Activated T-helper 1 cell treated with anti-CD3 and anti-CD28 coated beads, Interleukin-12 subunit alpha, Interleukin-12 subunit beta, Interleukin-2, Interleukin-4 antibody, amounts not matched to agents 30 ng/mL and 10 ng/mL and 1 ng/mL, durations not matched to agents 14 hours and 24 hours and 36 hours (primary cell): ENCODE measurements at regions of chr13 and their contacts with region 1.

Region 1: DNA sequence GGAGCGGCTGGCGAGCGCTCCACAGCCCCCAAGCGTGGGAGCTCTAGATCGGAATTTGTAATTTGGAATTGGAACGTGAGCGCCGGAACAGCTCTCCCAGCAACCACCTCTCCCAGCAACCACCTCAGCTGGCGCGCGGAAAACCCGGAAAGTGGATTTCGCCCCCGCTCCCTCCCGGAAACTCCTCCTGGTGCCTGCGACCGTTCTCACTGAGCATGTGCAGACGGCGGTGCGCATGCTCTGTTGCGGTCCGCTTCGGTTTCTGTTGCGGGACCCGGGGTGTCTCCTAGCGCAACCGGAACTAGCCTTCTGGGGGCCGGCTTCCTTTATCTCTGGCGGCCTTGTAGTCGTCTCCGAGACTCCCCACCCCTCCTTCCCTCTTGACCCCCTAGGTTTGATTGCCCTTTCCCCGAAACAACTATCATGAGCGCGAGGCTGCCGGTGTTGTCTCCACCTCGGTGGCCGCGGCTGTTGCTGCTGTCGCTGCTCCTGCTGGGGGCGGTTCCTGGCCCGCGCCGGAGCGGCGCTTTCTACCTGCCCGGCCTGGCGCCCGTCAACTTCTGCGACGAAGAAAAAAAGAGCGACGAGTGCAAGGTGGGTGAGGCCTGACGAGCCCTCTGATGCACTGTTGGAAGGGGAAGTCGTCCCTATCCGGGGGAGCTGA is at the start of gene TM9SF2:
- DNase-seq: peak; percentile 95
- H3K4me3 Mint-ChIP-seq: peak within 1 kb of the TSS; percentile 96
- H3K27ac Mint-ChIP-seq: peak within 1 kb of the TSS; percentile 95
- H3K4me1 Mint-ChIP-seq: peaks cover 70% of the 10 kb centered on the region
- H3K27me3 Mint-ChIP-seq: peaks cover 1% of the 10 kb centered on the region
- total RNA-seq, gene TM9SF2: 59.1 and 62.6 TPM in 2 replicates

Region 2: GRCh38 chr13:99269627-99270241 is 231.6 kb before region 1 on chr13:
- intact Hi-C with region 1: loop called (anchors 5 kb)
- DNase-seq: no peak
- H3K4me3 Mint-ChIP-seq: no peak overlapping the region
- H3K27ac Mint-ChIP-seq: no peak overlapping the region
- H3K4me1 Mint-ChIP-seq: peaks cover 55% of the 10 kb centered on the region
- H3K27me3 Mint-ChIP-seq: no peaks in the 10 kb centered on the region

Region 3: DNA sequence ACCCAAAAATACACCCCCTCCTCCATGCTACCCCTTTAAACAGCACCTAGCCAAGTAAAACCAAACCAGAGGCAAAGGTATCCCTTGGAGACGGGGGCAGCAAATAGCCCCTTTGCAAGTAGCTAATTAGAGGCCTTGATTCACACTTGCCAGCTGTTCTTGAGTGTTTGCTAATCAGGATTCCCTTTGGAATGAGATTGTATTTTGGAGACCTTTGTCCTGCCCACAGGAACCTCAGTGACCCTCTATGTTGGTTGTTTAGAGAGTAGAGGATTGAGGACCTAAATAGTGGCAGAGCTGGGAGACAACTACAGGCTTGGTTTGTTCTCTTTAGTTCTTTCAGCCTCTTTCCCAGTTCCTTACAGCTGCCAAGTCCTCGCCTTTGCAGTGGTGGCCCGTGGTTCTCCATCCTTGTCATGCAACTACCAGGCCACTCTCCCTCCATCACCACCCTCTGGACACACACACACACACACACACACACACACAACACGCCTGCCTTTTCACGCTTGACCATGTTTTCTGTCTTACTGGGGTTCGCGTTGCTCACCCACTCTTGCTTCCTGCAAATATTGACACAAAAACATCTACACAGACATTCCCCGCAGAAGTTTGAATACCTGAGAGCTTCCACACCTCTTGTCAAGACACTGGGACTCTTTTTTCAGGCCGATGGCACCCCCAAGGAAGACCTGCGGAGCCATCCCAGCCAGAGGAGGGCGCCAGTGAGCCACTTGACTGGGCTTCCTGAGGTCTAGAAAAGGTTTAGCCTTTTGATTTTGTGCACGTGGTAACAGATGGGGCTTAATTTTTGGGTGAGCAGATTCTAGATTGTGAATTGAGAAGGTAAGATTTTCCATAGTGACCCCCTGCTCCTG is 114.2 kb before region 1 on chr13:
- intact Hi-C with region 1: loop called (anchors 1 kb)
- DNase-seq: peak; percentile 62
- H3K4me3 Mint-ChIP-seq: no peak overlapping the region
- H3K27ac Mint-ChIP-seq: peak overlapping the region; percentile 64
- H3K4me1 Mint-ChIP-seq: peaks cover 39% of the 10 kb centered on the region
- H3K27me3 Mint-ChIP-seq: no peaks in the 10 kb centered on the region

Region 4: DNA sequence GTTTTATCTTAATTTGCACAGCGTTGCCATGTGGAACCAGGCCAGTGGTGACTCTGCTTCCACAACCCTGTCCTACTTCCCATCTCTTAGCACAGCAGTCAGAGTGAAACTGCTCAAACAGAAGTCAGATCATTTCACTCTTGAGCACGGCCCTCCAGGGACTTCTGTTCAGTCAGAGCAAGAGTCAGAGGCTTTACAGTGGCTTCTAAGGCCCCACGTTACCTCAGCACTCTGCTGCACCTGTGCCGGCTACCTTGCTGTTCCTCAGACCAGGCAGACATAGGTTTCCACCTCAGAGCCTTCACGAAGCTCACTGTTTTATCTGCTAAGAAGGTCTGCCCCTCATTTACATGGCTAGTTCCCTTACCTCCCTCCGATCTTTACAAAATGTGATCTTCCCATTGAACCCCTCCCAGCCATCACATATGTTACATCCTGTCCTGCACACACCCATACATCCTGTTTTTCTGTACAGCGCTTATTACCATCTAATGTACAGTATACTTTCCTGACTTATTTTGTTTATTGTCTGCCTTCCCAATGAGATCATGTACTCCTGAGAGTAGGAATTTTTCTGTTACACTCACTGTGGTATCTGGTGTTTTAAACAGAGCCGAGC is 41.6 kb after region 1 on chr13:
- intact Hi-C with region 1: loop called (anchors 2 kb)
- DNase-seq: peak; percentile 53
- H3K4me3 Mint-ChIP-seq: peak overlapping the region; percentile 46
- H3K27ac Mint-ChIP-seq: peak overlapping the region; percentile 35
- H3K4me1 Mint-ChIP-seq: peaks cover 43% of the 10 kb centered on the region
- H3K27me3 Mint-ChIP-seq: no peaks in the 10 kb centered on the region

Region 5: GRCh38 chr13:100674848-100675660 is 1173.7 kb after region 1 on chr13:
- intact Hi-C with region 1: loop called (anchors 5 kb)
- DNase-seq: peak; percentile 100
- H3K4me3 Mint-ChIP-seq: peak overlapping the region; percentile 87
- H3K27ac Mint-ChIP-seq: peak overlapping the region; percentile 86
- H3K4me1 Mint-ChIP-seq: peaks cover 31% of the 10 kb centered on the region
- H3K27me3 Mint-ChIP-seq: peaks cover 10% of the 10 kb centered on the region